ENCODE measurements at regions of chr12 and their contacts with region 1.

Region 1: DNA sequence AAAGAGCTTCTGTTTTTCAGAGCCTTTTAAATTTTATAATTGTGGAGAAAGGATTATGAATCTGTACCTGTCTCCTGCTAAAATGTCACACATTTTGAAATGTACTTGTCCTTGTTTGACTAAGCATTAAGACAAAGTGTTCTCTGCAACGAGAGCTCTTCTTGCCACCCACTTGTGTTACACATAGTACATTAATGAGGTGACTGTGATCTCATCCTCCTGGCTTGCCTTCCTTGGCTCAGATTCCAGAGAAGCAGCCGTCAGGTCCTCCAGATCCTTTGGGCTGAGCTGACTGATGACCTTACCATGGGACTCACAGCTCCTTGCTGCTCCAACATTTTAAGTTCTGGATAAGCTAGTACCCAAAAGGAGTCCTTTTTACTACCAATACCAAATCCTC is 81.4 kb downstream of the BBS10 start:
- DNase-seq: peak; percentile 92 to 96
- ATAC-seq: peak; percentile 99
- H3K4me3 ChIP-seq: peak overlapping the region in 1 of 4 donors; percentile 10
- H3K27ac ChIP-seq: peak overlapping the region; percentile 86 to 92 (median 89)
- H3K4me1 ChIP-seq: peaks cover 29 to 34% of the 10 kb centered on the region in 2 donors
- H3K27me3 ChIP-seq: no peaks in the 10 kb centered on the region
- CTCF ChIP-seq: no peak
- POLR2A ChIP-seq: peak; percentile 19 to 57

Region 2: GRCh38 chr12:75837700-75838099 is 429.1 kb before region 1 on chr12:
- in situ Hi-C with region 1: no loop called
- intact Hi-C with region 1: no loop called
- DNase-seq: no peak
- ATAC-seq: no peak
- H3K4me3 ChIP-seq: no peak overlapping the region
- H3K27ac ChIP-seq: no peak overlapping the region
- H3K4me1 ChIP-seq: no peaks in the 10 kb centered on the region
- H3K27me3 ChIP-seq: no peaks in the 10 kb centered on the region
- CTCF ChIP-seq: no peak
- POLR2A ChIP-seq: no peak

Region 3: GRCh38 chr12:76337583-76337982 is 70.8 kb after region 1 on chr12:
- in situ Hi-C with region 1: loop called in 2 of 4 experiments (anchors 5 to 10 kb)
- intact Hi-C with region 1: no loop called
- DNase-seq: no peak
- ATAC-seq: no peak
- H3K4me3 ChIP-seq: no peak overlapping the region
- H3K27ac ChIP-seq: no peak overlapping the region
- H3K4me1 ChIP-seq: peaks cover 9 to 13% of the 10 kb centered on the region in 2 donors
- H3K27me3 ChIP-seq: no peaks in the 10 kb centered on the region
- CTCF ChIP-seq: no peak
- POLR2A ChIP-seq: no peak

Region 4: GRCh38 chr12:76374386-76375020 is 107.7 kb after region 1 on chr12:
- in situ Hi-C with region 1: no loop called
- intact Hi-C with region 1: no loop called
- DNase-seq: no peak
- ATAC-seq: no peak
- H3K4me3 ChIP-seq: no peak overlapping the region
- H3K27ac ChIP-seq: no peak overlapping the region
- H3K4me1 ChIP-seq: no peaks in the 10 kb centered on the region
- H3K27me3 ChIP-seq: no peaks in the 10 kb centered on the region
- CTCF ChIP-seq: no peak
- POLR2A ChIP-seq: no peak

Region 5: GRCh38 chr12:76455582-76456345 is 189.0 kb after region 1 on chr12:
- in situ Hi-C with region 1: no loop called
- intact Hi-C with region 1: loop called (anchors 10 kb)
- DNase-seq: no peak
- ATAC-seq: peak; percentile 76 to 95
- H3K4me3 ChIP-seq: no peak overlapping the region
- H3K27ac ChIP-seq: peak overlapping the region in 2 of 4 donors; percentile 5 to 44
- H3K4me1 ChIP-seq: peaks cover 10 to 17% of the 10 kb centered on the region in 2 donors
- H3K27me3 ChIP-seq: no peaks in the 10 kb centered on the region
- CTCF ChIP-seq: peak in 4 of 5 experiments; percentile 25 to 68 (median 54)
- POLR2A ChIP-seq: no peak

Region 6: GRCh38 chr12:76559400-76560085 is 292.7 kb after region 1 on chr12 and contains the start of gene OSBPL8:
- in situ Hi-C with region 1: no loop called
- intact Hi-C with region 1: loop called (anchors 10 kb)
- DNase-seq: peak; percentile 90 to 95
- ATAC-seq: peak; percentile 90 to 94
- H3K4me3 ChIP-seq: peak within 1 kb of the TSS; percentile 90 to 100 (median 98)
- H3K27ac ChIP-seq: peak within 1 kb of the TSS; percentile 93 to 99 (median 95)
- H3K4me1 ChIP-seq: peaks cover 12 to 35% of the 10 kb centered on the region in 2 donors
- H3K27me3 ChIP-seq: no peaks in the 10 kb centered on the region
- CTCF ChIP-seq: peak; percentile 23 to 48 (median 37)
- POLR2A ChIP-seq: peak; percentile 85 to 94
- total RNA-seq, gene OSBPL8: 25.6 to 46.0 (median 43.4) TPM

Region 7: GRCh38 chr12:76763743-76764675 is 497.2 kb after region 1 on chr12 and contains the start of gene ZDHHC17:
- in situ Hi-C with region 1: no loop called
- intact Hi-C with region 1: loop called (anchors 10 kb)
- DNase-seq: peak; percentile 80 to 92
- ATAC-seq: peak; percentile 85 to 87
- H3K4me3 ChIP-seq: peak within 1 kb of the TSS; percentile 75 to 99 (median 86)
- H3K27ac ChIP-seq: peak within 1 kb of the TSS; percentile 92 to 100 (median 98)
- H3K4me1 ChIP-seq: peaks cover 26 to 41% of the 10 kb centered on the region in 2 donors
- H3K27me3 ChIP-seq: no peaks in the 10 kb centered on the region
- CTCF ChIP-seq: peak in 1 of 5 experiments; percentile 14
- POLR2A ChIP-seq: peak; percentile 70 to 79
- total RNA-seq, gene ZDHHC17: 15.5 to 35.6 (median 19.3) TPM

Measured in gastrocnemius medialis (tissue), 4 donors.